Upper lobe of right lung (tissue), 1 donor: ENCODE measurements at regions of chr16 and their contacts with region 1.

Region 1: GRCh38 chr16:67159593-67160406 is at the starts of genes FBXL8 and TRADD:
- DNase-seq: peak; percentile 92
- ATAC-seq: peak; percentile 83
- H3K4me3 ChIP-seq: peak within 1 kb of the TSS; percentile 87
- H3K27ac ChIP-seq: peak within 1 kb of the TSS; percentile 74
- H3K4me1 ChIP-seq: peaks cover 42% of the 10 kb centered on the region
- H3K27me3 ChIP-seq: peaks cover 14% of the 10 kb centered on the region
- CTCF ChIP-seq: peak; percentile 51
- total RNA-seq, gene FBXL8: 34.1 TPM
- total RNA-seq, gene TRADD: 24.1 TPM

Region 2: DNA sequence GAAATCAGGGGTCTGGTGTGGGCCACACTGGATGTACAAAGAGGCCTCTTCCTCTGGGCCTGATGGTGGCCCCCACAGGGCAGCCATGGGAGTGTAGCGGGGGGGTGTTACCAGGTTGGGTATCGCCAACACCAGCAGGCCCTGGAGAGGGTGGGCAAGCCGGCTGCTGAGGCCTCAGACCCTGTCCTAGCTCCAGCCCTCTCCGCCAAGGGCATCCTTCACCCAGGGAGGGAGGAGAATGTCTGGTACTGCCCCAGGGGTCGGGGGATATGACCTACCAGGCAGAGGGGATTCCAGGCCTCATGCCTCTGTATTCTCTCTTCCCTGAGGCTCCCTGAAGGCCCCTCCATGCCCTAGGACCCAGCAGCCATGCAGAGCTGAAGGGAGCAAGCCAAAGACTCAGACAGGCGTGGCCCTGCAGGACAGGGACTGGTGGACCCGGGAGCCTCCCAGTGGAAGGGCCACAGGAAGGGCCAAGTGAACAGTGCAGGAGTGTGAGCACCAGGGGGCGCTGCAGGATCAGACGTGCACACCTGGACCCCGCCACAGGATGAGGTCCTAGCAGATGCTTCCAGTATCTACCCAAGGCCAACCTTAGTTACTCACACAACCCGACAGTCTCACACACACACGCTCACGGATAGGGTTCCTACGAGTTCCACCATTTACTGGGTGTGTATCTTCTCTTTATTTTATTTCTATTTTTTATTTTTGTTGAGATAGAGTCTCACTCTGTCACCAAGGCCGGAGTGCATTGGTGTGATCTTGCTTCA is 182.3 kb before region 1 on chr16:
- intact Hi-C with region 1: loop called (anchors 10 kb)
- DNase-seq: peak; percentile 93
- ATAC-seq: peak; percentile 94
- H3K4me3 ChIP-seq: no peak overlapping the region
- H3K27ac ChIP-seq: no peak overlapping the region
- H3K4me1 ChIP-seq: peaks cover 16% of the 10 kb centered on the region
- H3K27me3 ChIP-seq: no peaks in the 10 kb centered on the region
- CTCF ChIP-seq: peak; percentile 98